ENCODE measurements at regions of chr19 and their contacts with region 1.

Region 1: GRCh38 chr19:5904352-5905113 is at the start of gene VMAC:
- DNase-seq: peak; percentile 99 to 100 (median 100)
- ATAC-seq: peak; percentile 77 to 80
- H3K4me3 Mint-ChIP-seq: peak within 1 kb of the TSS; percentile 91 to 99 (median 97)
- H3K27ac Mint-ChIP-seq: peak within 1 kb of the TSS; percentile 98 to 100 (median 99)
- H3K4me1 Mint-ChIP-seq: peaks cover 19 to 57% (median 43%) of the 10 kb centered on the region in 4 donors
- H3K27me3 Mint-ChIP-seq: peaks cover 0 to 2% (median 0%) of the 10 kb centered on the region in 5 donors
- polyA plus RNA-seq, gene VMAC: 6.2 to 8.4 (median 7.0) TPM

Region 2: GRCh38 chr19:5622463-5623396 is 281.8 kb before region 1 on chr19 and contains the starts of genes SAFB and SAFB2:
- POLR2A ChIA-PET with region 1: interaction called, 10 read pairs
- DNase-seq: peak; percentile 95 to 100 (median 100)
- ATAC-seq: peak; percentile 79 to 82
- H3K4me3 Mint-ChIP-seq: peak within 1 kb of the TSS; percentile 99 to 100 (median 100)
- H3K27ac Mint-ChIP-seq: peak within 1 kb of the TSS; percentile 99 to 100 (median 100)
- H3K4me1 Mint-ChIP-seq: peaks cover 46 to 82% (median 74%) of the 10 kb centered on the region in 4 donors
- H3K27me3 Mint-ChIP-seq: peaks cover 0 to 3% (median 0%) of the 10 kb centered on the region in 5 donors
- polyA plus RNA-seq, gene SAFB: 28.6 to 135 (median 59.3) TPM
- polyA plus RNA-seq, gene SAFB2: 25.8 to 47.4 (median 28.7) TPM

Region 3: DNA sequence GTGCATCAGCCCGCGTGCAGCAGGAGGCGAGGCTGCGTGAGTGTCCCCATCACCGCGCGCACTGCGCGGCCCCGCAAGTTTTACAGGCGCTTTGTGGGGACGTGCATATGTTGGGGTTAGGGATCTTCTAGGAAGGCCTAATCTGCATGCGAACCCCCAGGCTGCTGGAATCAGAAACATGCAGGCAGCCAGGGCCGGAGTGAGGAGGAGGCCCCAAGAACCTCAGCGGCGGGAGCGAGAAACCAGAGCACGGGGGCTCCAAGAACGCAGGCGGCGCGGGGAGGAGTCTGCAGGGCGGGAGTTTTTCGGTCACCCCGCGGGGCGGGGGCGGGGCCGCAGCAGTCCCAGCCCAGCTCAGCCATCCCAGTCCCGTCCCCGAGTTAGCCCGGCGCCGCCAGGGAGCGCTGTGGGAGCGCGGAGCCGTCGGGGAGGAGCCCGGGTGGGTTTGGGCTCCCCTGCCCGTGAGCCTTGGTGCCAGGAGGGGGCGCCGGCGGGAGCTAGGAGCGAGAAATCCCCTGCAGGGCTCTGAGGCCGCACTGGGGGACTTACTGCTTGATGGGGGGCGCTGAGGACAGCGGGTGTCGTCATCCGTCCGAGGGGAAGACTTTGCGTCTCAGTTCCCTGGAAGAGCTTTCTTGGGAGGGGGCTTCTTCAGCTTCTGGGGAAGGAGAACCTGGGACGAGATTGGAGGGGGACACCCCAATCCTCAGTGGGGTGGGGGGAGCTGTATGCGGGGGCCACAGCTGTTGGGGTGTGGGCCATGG is 100.6 kb before region 1 on chr19:
- POLR2A ChIA-PET with region 1: interaction called, 12 read pairs
- DNase-seq: peak; percentile 85 to 98 (median 93)
- ATAC-seq: peak; percentile 94 to 96
- H3K4me3 Mint-ChIP-seq: peak overlapping the region; percentile 70 to 86 (median 79)
- H3K27ac Mint-ChIP-seq: peak overlapping the region in 8 of 10 donors; percentile 55 to 91 (median 80)
- H3K4me1 Mint-ChIP-seq: peaks cover 14 to 27% (median 25%) of the 10 kb centered on the region in 4 donors
- H3K27me3 Mint-ChIP-seq: peaks cover 6 to 18% (median 14%) of the 10 kb centered on the region in 5 donors

Region 4: DNA sequence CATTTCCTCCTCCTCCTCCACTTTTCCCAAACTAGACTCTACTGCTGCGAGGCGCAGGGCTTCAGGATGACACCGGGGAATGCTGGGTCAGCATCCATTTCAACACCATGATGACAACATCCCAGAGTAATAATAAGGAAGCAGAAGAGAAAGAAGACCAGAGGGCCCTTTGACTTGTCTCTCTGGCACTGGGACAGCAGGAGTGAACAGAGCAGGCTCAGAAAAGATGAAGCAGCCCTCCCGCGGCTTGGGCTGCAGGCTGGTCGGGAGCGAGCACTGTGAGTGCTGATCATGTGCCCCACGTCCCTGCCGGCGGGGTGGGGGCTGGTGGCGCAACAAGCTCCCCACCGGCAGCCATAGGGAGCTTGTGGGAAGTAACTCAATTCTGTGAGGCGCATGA is 42.9 kb after region 1 on chr19:
- POLR2A ChIA-PET with region 1: interaction called, 12 read pairs
- DNase-seq: no peak
- ATAC-seq: no peak
- H3K4me3 Mint-ChIP-seq: peak overlapping the region in 7 of 10 donors; percentile 38 to 82 (median 67)
- H3K27ac Mint-ChIP-seq: peak overlapping the region; percentile 15 to 100 (median 90)
- H3K4me1 Mint-ChIP-seq: peaks cover 53 to 91% (median 84%) of the 10 kb centered on the region in 4 donors
- H3K27me3 Mint-ChIP-seq: no peaks in the 10 kb centered on the region

Region 5: DNA sequence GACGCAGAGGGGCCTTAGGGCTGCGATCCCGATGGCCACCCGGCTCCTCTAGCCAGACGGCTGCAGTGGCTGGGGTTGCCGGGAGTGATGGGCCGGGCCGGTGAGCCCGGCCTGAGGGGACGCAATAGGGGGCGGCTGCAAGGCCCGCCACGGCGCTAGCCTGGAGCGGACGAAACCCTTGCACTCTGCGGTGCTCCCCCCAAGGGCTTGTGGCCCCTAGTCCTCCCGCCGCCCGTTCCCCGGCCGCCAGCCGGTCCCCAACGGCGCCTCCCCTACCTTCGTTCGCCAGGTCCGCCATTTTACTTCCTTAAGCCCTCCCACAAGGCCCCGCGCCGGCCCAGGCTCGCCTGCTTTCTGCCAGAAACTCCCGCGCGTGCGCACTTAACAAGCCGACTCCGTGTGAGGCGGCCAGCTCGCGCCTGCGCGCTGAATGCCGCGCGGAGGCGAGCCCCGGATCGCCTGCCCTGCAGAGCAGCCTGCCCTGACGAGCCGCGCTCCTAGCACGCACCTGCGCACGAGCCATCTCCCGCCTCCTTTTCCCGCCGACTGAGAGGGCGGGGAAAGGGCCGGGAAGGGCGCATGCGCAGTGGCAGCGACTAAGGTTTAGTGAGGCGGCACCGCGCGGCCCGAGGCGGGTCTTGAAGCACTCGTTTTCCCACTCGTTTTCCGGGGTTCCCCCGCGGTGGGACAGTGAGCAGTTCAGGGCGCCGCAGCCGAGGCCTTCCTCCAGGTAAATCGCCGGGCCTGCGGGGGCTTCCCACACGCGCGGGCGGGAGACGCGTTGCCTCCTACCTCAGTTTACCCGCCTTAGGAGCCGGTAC is 73.5 kb after region 1 on chr19 and contains the start of gene RANBP3:
- POLR2A ChIA-PET with region 1: interaction called, 37 read pairs
- DNase-seq: peak; percentile 93 to 99 (median 99)
- ATAC-seq: peak; percentile 84 to 85
- H3K4me3 Mint-ChIP-seq: peak within 1 kb of the TSS; percentile 92 to 99 (median 96)
- H3K27ac Mint-ChIP-seq: peak within 1 kb of the TSS; percentile 86 to 99 (median 96)
- H3K4me1 Mint-ChIP-seq: peaks cover 30 to 60% (median 53%) of the 10 kb centered on the region in 4 donors
- H3K27me3 Mint-ChIP-seq: peaks cover 0 to 3% (median 0%) of the 10 kb centered on the region in 5 donors
- polyA plus RNA-seq, gene RANBP3: 7.7 to 13.0 (median 9.1) TPM